ENCODE measurements at regions of chr2 and their contacts with region 1.

Region 1: GRCh38 chr2:99442837-99443236 is 47.0 kb downstream of the REV1 start:
- DNase-seq: no peak
- ATAC-seq: peak; percentile 81

Region 2: GRCh38 chr2:99140056-99140859 is 302.6 kb before region 1 on chr2:
- intact Hi-C with region 1: no loop called
- DNase-seq: no peak
- ATAC-seq: no peak

Region 3: GRCh38 chr2:99150706-99151105 is 292.1 kb before region 1 on chr2:
- intact Hi-C with region 1: no loop called
- DNase-seq: no peak
- ATAC-seq: no peak

Region 4: DNA sequence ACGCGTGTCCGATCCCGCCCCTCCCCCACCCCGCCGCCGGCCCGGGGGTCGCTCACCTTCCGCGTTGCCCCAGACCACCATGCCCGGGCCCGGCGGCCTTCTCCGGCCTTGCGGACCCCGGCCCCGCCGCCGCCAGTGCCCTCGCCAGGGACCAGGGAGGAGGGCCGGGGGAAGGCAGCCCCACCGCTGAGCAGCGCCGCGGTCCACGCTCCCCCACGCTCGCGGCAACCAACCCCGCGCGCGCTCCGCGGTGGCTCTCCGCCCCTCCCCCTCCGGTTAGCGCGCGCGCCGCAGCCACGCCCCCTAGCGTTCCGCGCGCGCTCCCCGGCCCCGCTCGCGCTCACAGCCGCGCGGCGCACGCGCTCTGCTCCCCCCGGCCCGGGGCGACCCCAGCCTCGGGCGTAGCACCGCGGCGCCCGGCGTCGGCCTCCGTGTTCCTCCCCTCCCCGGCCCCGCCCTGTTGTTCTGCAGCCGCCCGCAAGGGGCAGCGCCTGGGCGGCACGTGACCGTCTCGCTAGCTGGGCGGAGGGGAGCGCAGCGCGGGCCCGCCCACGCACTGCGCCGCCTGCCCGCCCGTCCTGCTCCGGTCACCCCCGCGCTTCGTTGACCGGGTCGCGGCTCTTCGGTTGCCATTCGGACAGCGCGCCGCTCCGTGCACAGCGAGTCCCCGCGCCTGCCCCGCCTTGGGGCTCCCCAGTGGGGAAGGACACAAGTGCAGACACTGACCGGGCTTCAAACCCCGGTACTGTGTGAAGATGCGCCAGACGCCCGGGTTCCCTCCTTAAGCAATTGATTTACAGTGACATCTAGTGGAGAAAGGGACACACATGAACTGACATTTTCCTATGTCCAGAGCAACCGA is 47.2 kb after region 1 on chr2 and contains the start of gene REV1:
- intact Hi-C with region 1: loop called (anchors 10 kb)
- DNase-seq: peak; percentile 96
- ATAC-seq: peak; percentile 90
- total RNA-seq, gene REV1: 74.2 TPM

Region 5: GRCh38 chr2:100513650-100514049 is 1070.8 kb after region 1 on chr2:
- intact Hi-C with region 1: no loop called
- DNase-seq: no peak
- ATAC-seq: no peak

Measured in left ventricle myocardium superior (tissue), 1 donor.